Head of caudate nucleus (tissue), 42 donors: ENCODE measurements at regions of chr17 and their contacts with region 1.

Region 1: GRCh38 chr17:57255776-57256681 is at the start of gene MSI2:
- DNase-seq: peak; percentile 84 to 97 (median 93)

Region 2: DNA sequence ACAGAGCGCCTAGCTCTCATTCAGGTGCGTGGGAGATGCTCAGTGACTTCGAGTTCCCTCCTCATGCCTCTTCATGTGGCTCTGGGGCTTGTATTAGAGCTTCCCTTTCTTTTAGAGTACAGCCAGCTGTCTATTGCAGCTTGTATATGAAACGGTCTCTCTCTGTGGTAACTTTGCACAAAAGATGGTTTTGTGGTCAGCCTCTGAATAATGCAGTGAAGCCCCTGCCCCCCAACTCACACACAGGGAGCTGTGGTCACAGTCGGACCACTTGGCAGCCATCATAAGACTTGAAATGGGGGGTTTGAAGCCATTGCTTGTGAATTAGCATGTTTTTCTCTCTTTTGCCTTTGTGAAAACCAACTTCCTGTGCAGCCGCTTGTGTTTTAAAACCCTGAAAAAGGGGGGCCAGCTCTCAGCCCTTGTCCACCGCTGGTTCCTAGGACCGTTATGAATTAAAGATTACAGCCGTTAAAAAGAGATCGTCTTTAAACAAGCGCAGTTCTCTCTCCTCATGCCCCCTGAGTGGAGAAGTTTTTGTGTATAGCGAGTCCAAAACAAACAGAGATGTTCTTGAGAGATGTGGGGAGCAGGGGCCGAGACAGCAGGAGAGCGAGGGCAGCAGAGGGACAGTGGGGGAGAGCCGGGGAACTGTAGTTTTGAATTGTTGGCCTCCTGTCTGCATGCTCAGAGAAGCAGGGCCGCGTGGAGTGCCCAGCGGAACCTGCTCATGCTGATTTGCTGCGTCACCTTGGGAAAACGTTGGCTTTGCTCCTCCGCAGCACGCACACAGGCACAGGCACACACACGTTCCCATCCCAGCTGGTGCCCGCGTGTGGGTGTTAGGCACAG is 199.3 kb after region 1 on chr17:
- intact Hi-C with region 1: no loop called
- DNase-seq: peak in 26 of 42 donors; percentile 19 to 74 (median 48)

Region 3: GRCh38 chr17:57662644-57663308 is 406.7 kb after region 1 on chr17:
- intact Hi-C with region 1: loop called (anchors 10 kb)
- DNase-seq: peak; percentile 95 to 100 (median 99)